ENCODE measurements at regions of chr3 and their contacts with region 1.

Region 1: DNA sequence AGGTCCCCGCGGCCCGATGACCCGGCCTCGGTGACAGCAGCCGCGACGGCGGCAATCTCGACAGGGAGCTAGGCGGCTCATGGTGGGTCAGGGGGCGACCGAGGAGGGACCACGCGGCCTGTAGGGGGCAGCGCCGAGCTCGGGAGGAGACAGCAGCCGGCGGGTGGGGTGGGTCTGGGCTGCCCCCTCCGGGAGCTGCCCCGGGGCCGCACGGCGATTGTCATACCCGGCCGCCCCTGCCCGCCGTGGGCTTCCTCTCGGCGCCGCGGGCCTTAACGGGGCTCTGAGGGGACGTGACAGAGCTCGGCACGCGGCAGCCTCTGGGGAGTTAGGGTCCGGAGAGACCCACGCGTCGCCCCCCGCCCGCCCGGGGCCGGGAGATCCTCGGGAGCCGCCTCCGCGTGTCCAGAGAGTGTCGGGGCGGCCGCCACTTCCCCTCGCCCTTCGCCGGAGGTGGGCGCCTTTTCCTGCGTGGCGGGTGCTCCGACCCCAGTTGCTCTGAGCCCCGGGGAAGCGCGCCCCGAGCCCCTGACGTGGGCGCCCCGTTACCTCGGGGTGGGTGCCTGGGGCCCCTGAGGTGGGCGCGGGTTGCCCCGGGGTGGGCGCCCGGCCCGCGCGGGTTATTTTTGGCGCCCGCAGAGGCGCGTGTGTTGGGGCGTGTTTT is 539 bp upstream of the PLCL2 start:
- DNase-seq: peak; percentile 70 to 82
- ATAC-seq: peak; percentile 53 to 67 (median 55)
- H3K4me3 ChIP-seq: peak overlapping the region; percentile 99
- H3K4me3 Mint-ChIP-seq: peak overlapping the region; percentile 99
- H3K27ac ChIP-seq: peak overlapping the region; percentile 83
- H3K27ac Mint-ChIP-seq: peak overlapping the region; percentile 96
- H3K4me1 ChIP-seq: peaks cover 19% of the 10 kb centered on the region
- H3K4me1 Mint-ChIP-seq: peaks cover 38 to 49% of the 10 kb centered on the region in 2 donors
- H3K27me3 ChIP-seq: no peaks in the 10 kb centered on the region
- H3K27me3 Mint-ChIP-seq: peaks cover 4 to 7% of the 10 kb centered on the region in 2 donors
- CTCF ChIP-seq: peak; percentile 61

Region 2: GRCh38 chr3:16300881-16301359 is 583.3 kb before region 1 on chr3:
- intact Hi-C with region 1: loop called (anchors 5 kb)
- DNase-seq: peak in 1 of 2 donors; percentile 86
- ATAC-seq: peak; percentile 73 to 90 (median 88)
- H3K4me3 ChIP-seq: peak overlapping the region; percentile 1
- H3K4me3 Mint-ChIP-seq: peak overlapping the region; percentile 96
- H3K27ac ChIP-seq: peak overlapping the region; percentile 83
- H3K27ac Mint-ChIP-seq: peak overlapping the region; percentile 95 to 98
- H3K4me1 ChIP-seq: peaks cover 50% of the 10 kb centered on the region
- H3K4me1 Mint-ChIP-seq: peaks cover 68 to 86% of the 10 kb centered on the region in 2 donors
- H3K27me3 ChIP-seq: no peaks in the 10 kb centered on the region
- H3K27me3 Mint-ChIP-seq: no peaks in the 10 kb centered on the region
- CTCF ChIP-seq: no peak

Region 3: DNA sequence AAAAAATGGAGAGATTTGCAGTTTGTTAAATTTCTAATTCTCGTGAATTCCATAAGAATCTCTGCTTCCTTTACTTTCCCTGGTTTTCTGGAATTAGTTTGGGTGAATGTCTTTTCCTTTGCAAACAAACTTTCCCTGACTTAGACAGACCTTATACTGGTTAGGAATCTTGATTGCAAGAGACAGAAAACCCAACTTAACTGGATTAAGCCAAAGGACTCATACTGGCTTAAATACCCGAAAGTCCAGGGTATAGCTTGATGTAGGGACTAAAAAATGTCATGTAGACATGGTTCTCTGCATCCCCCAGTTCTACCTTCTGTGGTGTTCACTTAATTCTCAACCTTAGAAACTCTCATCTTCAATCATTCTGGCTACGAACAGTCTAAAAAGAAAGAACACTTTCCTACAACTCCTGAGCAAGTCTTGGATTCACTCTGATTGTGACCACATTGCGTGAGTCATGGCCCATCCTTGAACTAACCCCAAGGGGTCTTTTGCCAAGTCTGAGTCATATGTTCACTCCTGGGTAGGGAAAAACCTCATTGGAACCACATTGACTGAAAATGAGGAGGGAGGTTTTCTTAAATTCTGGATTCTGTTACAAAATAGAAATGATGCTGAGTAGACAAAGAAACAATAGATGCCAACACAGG is 143.0 kb before region 1 on chr3:
- intact Hi-C with region 1: no loop called
- DNase-seq: no peak
- ATAC-seq: no peak
- H3K4me3 ChIP-seq: no peak overlapping the region
- H3K4me3 Mint-ChIP-seq: no peak overlapping the region
- H3K27ac ChIP-seq: no peak overlapping the region
- H3K27ac Mint-ChIP-seq: no peak overlapping the region
- H3K4me1 ChIP-seq: no peaks in the 10 kb centered on the region
- H3K4me1 Mint-ChIP-seq: peaks cover 0 to 5% of the 10 kb centered on the region in 2 donors
- H3K27me3 ChIP-seq: peaks cover 2% of the 10 kb centered on the region
- H3K27me3 Mint-ChIP-seq: peaks cover 0 to 7% of the 10 kb centered on the region in 2 donors
- CTCF ChIP-seq: no peak

Region 4: GRCh38 chr3:16789344-16790120 is 94.7 kb before region 1 on chr3:
- intact Hi-C with region 1: loop called (anchors 5 kb)
- DNase-seq: peak; percentile 48 to 59
- ATAC-seq: peak; percentile 95 to 100 (median 95)
- H3K4me3 ChIP-seq: no peak overlapping the region
- H3K4me3 Mint-ChIP-seq: peak overlapping the region; percentile 68
- H3K27ac ChIP-seq: no peak overlapping the region
- H3K27ac Mint-ChIP-seq: peak overlapping the region; percentile 25 to 55
- H3K4me1 ChIP-seq: peaks cover 26% of the 10 kb centered on the region
- H3K4me1 Mint-ChIP-seq: peaks cover 70 to 78% of the 10 kb centered on the region in 2 donors
- H3K27me3 ChIP-seq: no peaks in the 10 kb centered on the region
- H3K27me3 Mint-ChIP-seq: peaks cover 10 to 17% of the 10 kb centered on the region in 2 donors
- CTCF ChIP-seq: no peak

Region 5: DNA sequence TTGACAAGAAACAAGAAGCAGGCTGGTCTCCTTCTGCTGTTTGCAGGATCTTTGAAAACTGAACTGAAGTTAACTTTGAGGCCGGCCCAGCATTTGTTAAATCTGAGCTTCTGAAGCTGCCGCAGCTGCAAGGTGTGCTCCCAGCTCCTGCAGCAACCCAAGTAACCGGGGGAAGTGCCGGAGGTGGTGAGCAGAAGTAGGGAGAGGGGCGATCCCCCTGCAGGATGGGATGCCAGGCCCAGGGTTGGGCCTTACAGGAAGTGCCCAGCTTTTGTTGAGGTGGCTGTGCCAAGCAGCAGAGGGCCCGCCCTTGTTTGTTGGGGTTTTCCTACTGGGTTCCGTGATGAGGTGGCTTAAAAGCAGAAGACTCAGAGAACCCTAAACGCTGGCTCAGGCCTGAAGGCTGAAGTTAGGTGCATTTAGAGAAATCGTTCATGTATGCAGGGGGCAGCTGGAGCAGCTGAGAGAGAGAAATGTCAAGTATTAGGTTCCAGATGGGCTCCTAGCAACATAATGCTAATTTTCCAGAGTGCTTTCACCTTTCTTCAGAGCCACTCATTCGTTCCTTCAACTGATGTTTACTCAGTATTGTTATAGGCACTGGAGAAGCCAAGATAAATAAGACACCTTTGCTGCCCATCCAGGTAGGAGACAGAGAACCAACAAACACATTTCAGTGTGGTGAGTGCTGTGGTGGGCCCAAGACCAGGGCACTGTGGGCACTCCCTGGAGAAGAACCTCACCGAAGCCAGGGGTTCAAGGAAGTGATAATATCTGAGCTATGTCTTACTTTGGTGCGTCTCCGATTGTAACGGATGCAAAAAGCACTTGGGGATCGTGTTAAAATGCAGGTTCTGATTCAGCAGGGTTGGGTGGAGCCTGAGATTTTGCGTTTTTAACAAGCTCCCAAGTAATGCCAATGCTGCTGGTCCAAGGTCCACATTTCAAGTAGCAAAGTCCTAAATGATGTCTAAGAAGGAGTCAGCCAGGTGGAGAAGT is 41.6 kb before region 1 on chr3:
- intact Hi-C with region 1: loop called (anchors 1 kb)
- DNase-seq: peak; percentile 68 to 90
- ATAC-seq: peak; percentile 84 to 90 (median 85)
- H3K4me3 ChIP-seq: peak overlapping the region; percentile 8
- H3K4me3 Mint-ChIP-seq: peak overlapping the region; percentile 93
- H3K27ac ChIP-seq: peak overlapping the region; percentile 83
- H3K27ac Mint-ChIP-seq: peak overlapping the region; percentile 98 to 99
- H3K4me1 ChIP-seq: peaks cover 52% of the 10 kb centered on the region
- H3K4me1 Mint-ChIP-seq: peaks cover 66 to 72% of the 10 kb centered on the region in 2 donors
- H3K27me3 ChIP-seq: no peaks in the 10 kb centered on the region
- H3K27me3 Mint-ChIP-seq: peaks cover 0 to 6% of the 10 kb centered on the region in 2 donors
- CTCF ChIP-seq: no peak

Region 6: GRCh38 chr3:16904423-16905417 is 20.5 kb after region 1 on chr3:
- intact Hi-C with region 1: loop called (anchors 2 kb)
- DNase-seq: peak in 1 of 2 donors; percentile 74
- ATAC-seq: peak; percentile 62 to 72 (median 71)
- H3K4me3 ChIP-seq: no peak overlapping the region
- H3K4me3 Mint-ChIP-seq: peak overlapping the region; percentile 83
- H3K27ac ChIP-seq: peak overlapping the region; percentile 51
- H3K27ac Mint-ChIP-seq: peak overlapping the region; percentile 82 to 94
- H3K4me1 ChIP-seq: peaks cover 58% of the 10 kb centered on the region
- H3K4me1 Mint-ChIP-seq: peaks cover 87 to 89% of the 10 kb centered on the region in 2 donors
- H3K27me3 ChIP-seq: no peaks in the 10 kb centered on the region
- H3K27me3 Mint-ChIP-seq: no peaks in the 10 kb centered on the region
- CTCF ChIP-seq: no peak

Region 7: DNA sequence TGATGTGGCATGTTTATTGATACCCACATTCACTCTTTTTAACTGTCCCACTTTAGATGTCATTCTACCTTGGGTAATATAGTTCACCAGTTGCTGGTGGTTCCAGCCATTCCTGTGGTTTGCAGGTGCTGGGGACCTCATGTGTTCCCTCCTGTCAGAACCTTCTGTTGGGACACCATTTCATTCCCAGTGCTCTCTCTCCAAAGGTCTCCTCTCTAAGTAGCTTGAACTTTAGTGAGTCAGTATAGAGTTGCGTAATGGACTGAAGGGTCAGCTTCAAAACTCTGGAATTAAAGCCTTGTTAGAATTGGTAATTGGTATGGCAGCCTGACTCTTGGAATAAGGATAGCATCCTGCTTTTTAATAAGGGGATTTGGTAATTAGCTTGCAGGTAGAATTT is 109.0 kb after region 1 on chr3:
- intact Hi-C with region 1: loop called (anchors 5 kb)
- DNase-seq: no peak
- ATAC-seq: no peak
- H3K4me3 ChIP-seq: no peak overlapping the region
- H3K4me3 Mint-ChIP-seq: no peak overlapping the region
- H3K27ac ChIP-seq: no peak overlapping the region
- H3K27ac Mint-ChIP-seq: peak overlapping the region; percentile 73 to 77
- H3K4me1 ChIP-seq: peaks cover 48% of the 10 kb centered on the region
- H3K4me1 Mint-ChIP-seq: peaks cover 88 to 95% of the 10 kb centered on the region in 2 donors
- H3K27me3 ChIP-seq: no peaks in the 10 kb centered on the region
- H3K27me3 Mint-ChIP-seq: no peaks in the 10 kb centered on the region
- CTCF ChIP-seq: no peak

Region 8: GRCh38 chr3:17032407-17033034 is 148.3 kb after region 1 on chr3:
- intact Hi-C with region 1: loop called (anchors 5 kb)
- DNase-seq: peak in 1 of 2 donors; percentile 25
- ATAC-seq: no peak
- H3K4me3 ChIP-seq: no peak overlapping the region
- H3K4me3 Mint-ChIP-seq: peak overlapping the region; percentile 47
- H3K27ac ChIP-seq: no peak overlapping the region
- H3K27ac Mint-ChIP-seq: peak overlapping the region; percentile 67 to 76
- H3K4me1 ChIP-seq: peaks cover 23% of the 10 kb centered on the region
- H3K4me1 Mint-ChIP-seq: peaks cover 68 to 76% of the 10 kb centered on the region in 2 donors
- H3K27me3 ChIP-seq: no peaks in the 10 kb centered on the region
- H3K27me3 Mint-ChIP-seq: no peaks in the 10 kb centered on the region
- CTCF ChIP-seq: peak; percentile 23

Region 9: DNA sequence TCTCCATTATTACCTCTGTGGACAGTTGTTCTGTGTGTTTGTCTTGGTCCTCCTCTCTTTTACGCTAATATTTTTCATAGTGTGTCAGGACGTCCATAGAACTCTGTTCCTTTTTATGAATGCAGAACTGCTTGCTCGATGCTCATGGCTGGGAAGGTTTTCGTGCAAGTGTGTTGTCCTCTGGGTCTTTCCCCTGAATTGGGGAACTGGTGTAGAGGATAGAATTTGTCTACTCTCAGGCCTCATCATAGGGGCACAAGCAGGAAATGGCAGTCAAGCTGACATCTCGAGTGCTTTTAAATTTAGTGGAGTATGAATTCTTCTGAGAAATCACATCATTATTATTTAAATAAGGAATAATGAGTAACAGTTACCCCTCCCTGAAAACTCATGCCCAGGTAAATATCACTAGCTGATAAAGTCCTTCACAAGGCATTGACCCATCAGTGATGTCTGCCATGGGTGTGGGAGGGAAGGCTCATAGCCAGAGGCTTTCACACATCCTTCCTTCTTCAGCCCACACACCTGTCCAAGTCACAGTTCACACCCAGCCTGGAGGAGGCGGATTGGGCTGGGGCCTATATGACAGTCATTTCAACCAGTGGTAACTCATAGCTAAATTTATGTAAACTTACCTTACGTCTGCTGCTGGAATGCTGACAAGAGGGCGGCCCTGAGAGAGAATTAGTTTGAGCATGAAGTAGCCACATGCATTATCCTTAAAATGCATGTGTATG is 226.6 kb after region 1 on chr3:
- intact Hi-C with region 1: no loop called
- DNase-seq: no peak
- ATAC-seq: no peak
- H3K4me3 ChIP-seq: no peak overlapping the region
- H3K4me3 Mint-ChIP-seq: no peak overlapping the region
- H3K27ac ChIP-seq: no peak overlapping the region
- H3K27ac Mint-ChIP-seq: no peak overlapping the region
- H3K4me1 ChIP-seq: no peaks in the 10 kb centered on the region
- H3K4me1 Mint-ChIP-seq: peaks cover 0 to 21% of the 10 kb centered on the region in 2 donors
- H3K27me3 ChIP-seq: no peaks in the 10 kb centered on the region
- H3K27me3 Mint-ChIP-seq: peaks cover 9 to 11% of the 10 kb centered on the region in 2 donors
- CTCF ChIP-seq: no peak

Measured in natural killer cell (primary cell).